ENCODE measurements at regions of chr18 and their contacts with region 1.

Region 1: GRCh38 chr18:61833387-61833786 is 59.4 kb downstream of the RNF152 start:
- DNase-seq: no peak
- ATAC-seq: no peak
- H3K4me3 ChIP-seq: no peak overlapping the region
- H3K27ac ChIP-seq: no peak overlapping the region
- H3K4me1 ChIP-seq: no peaks in the 10 kb centered on the region
- H3K27me3 ChIP-seq: no peaks in the 10 kb centered on the region
- CTCF ChIP-seq: no peak

Region 2: GRCh38 chr18:61196750-61197149 is 636.6 kb before region 1 on chr18:
- intact Hi-C with region 1: no loop called
- DNase-seq: no peak
- ATAC-seq: no peak
- H3K4me3 ChIP-seq: no peak overlapping the region
- H3K27ac ChIP-seq: no peak overlapping the region
- H3K4me1 ChIP-seq: no peaks in the 10 kb centered on the region
- H3K27me3 ChIP-seq: no peaks in the 10 kb centered on the region
- CTCF ChIP-seq: no peak

Region 3: DNA sequence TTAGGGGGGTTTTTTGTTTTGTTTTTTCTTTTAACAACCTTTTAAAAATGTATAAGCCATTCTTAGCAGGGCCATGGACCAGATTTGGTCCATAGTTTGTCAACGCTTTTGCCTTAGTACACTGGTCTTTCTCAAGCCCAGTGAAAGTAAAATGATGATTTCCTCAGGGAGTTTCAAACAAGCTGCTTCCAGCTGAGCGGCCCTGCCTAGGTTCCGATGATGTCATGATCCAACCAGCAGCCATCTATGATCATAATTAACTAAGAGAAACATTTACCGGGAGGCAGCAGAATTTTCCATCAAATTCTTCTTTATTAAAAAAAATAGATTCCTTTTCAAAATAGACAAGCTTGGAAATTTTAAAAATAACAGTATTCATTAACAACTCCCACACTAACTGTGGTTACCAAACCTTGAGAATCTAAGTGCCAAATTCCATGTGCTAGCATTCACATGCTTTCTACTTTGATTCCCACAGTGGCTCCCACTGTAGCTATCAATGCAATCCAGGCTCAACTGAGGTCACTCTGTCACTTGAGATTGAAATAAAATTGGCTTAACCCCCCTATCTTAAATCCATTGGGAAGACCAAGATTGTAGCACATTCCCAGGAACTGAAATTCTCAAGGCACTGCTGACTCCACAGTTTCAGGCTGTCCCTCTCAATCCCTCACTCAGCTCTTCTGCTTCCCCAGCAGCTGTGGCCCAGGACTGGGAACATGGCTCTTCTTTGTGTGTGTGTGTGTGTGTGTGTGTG is 89.4 kb before region 1 on chr18:
- intact Hi-C with region 1: loop called in 1 of 2 experiments (anchors 5 kb)
- DNase-seq: no peak
- ATAC-seq: peak in 2 of 4 donors; percentile 48 to 50
- H3K4me3 ChIP-seq: no peak overlapping the region
- H3K27ac ChIP-seq: peak overlapping the region; percentile 42
- H3K4me1 ChIP-seq: no peaks in the 10 kb centered on the region
- H3K27me3 ChIP-seq: no peaks in the 10 kb centered on the region
- CTCF ChIP-seq: no peak

Region 4: DNA sequence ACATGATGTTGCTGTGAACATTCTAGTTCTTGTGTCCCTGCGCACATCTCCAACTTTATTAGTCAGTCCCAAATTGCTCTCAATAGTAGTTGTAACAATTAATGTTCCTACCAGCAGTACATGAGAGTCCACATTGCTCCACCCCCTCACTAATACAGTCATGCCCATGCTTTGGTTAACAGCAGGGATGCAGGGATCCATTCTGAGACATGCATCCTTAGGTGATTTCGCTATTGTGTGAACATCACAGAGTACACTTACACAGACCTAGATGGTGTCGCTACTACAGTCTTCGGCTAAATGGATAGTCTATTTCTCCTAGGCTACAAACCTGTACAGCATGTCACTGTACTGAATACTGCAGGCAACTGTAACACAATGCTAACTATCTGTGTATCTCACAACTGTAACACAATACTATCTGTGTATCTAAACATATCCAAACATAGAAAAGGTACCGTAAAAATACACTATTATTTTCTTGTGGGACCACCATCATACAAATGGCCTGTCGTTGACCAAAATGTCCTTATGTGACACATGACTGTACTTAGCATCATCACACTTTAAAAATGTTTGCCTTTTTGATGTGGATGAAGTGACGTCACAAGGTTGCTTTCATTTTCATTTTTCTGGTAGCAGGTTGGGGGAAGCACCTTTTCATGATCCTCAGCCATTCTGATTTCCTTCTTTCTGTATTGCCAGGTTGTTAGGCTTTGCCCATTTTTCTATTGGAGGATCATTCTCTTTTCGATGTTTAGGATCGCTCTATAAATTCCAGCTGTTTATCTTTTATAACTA is 142.3 kb after region 1 on chr18:
- intact Hi-C with region 1: no loop called
- DNase-seq: no peak
- ATAC-seq: no peak
- H3K4me3 ChIP-seq: no peak overlapping the region
- H3K27ac ChIP-seq: no peak overlapping the region
- H3K4me1 ChIP-seq: no peaks in the 10 kb centered on the region
- H3K27me3 ChIP-seq: no peaks in the 10 kb centered on the region
- CTCF ChIP-seq: no peak

Measured in psoas muscle (tissue), 8 donors.